ENCODE measurements at regions of chr11 and their contacts with region 1.

Region 1: DNA sequence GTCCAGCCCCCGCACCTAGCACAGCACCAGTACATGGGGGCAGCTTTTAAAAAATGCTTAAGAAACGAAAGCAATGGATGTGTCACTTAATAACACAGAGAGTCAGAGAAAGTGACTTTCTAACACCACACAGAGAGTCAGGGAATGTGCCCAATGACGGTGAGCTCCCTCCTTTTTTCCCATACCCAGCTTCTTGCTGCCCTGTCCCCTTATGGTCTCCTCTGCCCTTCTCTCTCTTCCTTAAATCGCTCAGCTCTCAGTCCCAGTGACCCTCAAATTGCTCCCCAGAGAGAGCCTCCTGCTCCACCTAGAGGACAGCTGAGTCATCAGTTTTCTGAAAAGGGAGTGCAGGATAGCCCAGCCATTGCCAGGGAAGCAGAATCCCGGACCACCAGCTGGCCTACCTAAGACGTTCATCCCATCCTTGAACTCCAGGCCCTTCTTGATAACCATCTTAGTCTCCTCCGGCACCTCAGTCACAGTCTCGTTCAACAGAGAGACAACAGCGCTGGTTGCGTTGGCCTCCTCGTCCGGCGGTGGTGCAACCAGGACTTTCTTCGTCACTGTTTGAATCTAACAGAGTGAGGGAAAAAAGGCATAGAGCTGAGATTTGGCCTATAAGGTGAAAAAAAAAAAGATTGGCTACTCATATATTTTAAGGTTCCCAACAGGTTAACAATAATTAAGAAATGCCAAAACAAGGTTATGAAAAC is 113.5 kb downstream of the SLC1A2 start:
- DNase-seq: no peak
- H3K4me3 ChIP-seq: no peak overlapping the region
- H3K27ac ChIP-seq: no peak overlapping the region
- H3K27me3 ChIP-seq: no peaks in the 10 kb centered on the region
- CTCF ChIP-seq: peak; percentile 68

Region 2: DNA sequence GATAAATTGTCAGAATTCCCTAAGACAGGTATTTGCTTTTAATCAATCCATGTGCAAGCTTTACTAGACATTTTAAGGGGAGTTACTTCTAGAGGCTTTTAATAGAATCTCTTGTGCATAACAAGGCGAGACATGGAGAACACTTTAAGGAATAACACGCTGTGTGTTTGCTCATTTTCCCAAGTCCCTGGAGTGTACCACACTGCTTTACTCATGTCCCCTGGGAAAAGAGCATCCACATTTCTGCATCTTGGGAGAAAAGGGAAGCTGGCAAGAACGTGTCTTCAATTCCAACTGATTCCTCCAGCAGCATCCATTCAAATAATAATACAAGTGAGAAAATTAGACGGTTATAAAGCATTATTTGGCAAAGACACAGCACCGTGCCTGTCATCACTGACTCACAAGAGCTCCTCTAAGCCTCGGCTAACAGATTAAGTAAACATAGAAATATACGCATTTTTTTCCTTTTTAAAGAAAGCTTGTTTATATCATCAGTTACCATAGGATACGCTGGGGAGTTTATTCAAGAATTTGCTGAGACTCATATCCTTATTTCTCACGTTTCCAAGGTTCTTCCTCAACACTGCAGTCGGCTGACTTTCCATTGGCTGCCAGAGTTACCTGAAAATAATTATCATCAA is 45.4 kb before region 1 on chr11:
- CTCF ChIA-PET with region 1: no interaction called
- POLR2A ChIA-PET with region 1: no interaction called
- DNase-seq: peak; percentile 72
- H3K4me3 ChIP-seq: no peak overlapping the region
- H3K27ac ChIP-seq: peak overlapping the region; percentile 59
- H3K27me3 ChIP-seq: no peaks in the 10 kb centered on the region
- CTCF ChIP-seq: no peak

Region 3: GRCh38 chr11:35316161-35316560 is 10.3 kb after region 1 on chr11:
- CTCF ChIA-PET with region 1: interaction called, 14 read pairs
- POLR2A ChIA-PET with region 1: no interaction called
- DNase-seq: no peak
- H3K4me3 ChIP-seq: no peak overlapping the region
- H3K27ac ChIP-seq: no peak overlapping the region
- H3K27me3 ChIP-seq: no peaks in the 10 kb centered on the region
- CTCF ChIP-seq: no peak

Measured in AG04450 (cell line).